ENCODE measurements at regions of chr3 and their contacts with region 1.

Region 1: GRCh38 chr3:69425261-69425660 is 39.4 kb upstream of the FRMD4B start:
- DNase-seq: peak; percentile 69
- H3K4me3 ChIP-seq: no peak overlapping the region
- H3K27ac ChIP-seq: no peak overlapping the region
- H3K4me1 ChIP-seq: peaks cover 15% of the 10 kb centered on the region
- H3K27me3 ChIP-seq: no peaks in the 10 kb centered on the region
- CTCF ChIP-seq: peak; percentile 71 to 74
- POLR2A ChIP-seq: no peak

Region 2: DNA sequence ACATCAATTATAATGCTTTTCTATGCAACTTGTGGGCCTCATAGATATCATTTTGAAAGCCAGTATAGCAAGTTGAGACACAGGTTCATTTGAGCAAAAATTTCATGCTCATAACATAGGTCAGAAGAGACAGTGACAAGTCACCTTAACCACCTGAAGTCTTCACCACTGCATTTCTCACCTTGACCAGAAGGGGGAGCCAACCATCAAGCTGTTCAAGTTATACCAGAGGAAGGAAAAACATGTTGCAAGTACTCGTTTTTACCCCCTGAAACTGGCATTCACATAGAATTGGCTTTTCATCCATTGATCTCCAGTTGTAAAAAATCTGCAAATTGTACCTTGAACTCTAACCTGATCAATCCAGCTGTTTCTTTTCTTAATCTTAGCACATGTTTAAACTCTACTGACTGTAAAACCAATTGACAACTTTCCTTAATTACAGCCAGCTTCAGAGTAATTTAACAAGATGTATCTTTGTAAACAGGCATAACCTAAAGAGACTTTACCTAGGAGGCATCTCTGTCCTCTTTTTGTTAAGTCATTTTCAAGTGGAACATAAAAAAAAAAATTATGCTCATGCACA is 304.3 kb before region 1 on chr3:
- CTCF ChIA-PET with region 1: interaction called, 57 read pairs
- POLR2A ChIA-PET with region 1: no interaction called
- dilution Hi-C with region 1: no loop called
- intact Hi-C with region 1: loop called (anchors 1 kb)
- DNase-seq: peak; percentile 86
- H3K4me3 ChIP-seq: no peak overlapping the region
- H3K27ac ChIP-seq: no peak overlapping the region
- H3K4me1 ChIP-seq: peaks cover 20% of the 10 kb centered on the region
- H3K27me3 ChIP-seq: no peaks in the 10 kb centered on the region
- CTCF ChIP-seq: peak; percentile 85 to 88
- POLR2A ChIP-seq: no peak

Region 3: DNA sequence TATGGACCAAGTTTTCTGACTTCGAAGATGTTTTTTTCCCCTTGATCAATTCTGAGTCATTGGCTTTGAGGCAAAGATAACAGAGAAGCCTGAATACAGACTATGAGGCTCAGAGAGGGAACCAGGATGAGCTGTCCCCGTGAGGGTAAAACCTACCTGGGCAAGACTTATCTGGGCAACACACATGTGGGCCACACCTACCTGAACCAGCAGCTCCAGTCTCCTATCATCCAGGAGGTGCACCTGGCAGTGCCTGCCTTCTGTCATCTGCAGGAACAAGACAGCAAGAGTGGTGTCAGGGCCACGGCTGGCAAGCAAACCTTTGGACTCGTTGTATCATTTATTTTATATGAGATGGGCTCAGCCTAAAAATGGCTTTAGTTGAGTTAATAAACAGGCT is 112.0 kb before region 1 on chr3:
- CTCF ChIA-PET with region 1: interaction called, 12 read pairs
- POLR2A ChIA-PET with region 1: interaction called, 9 read pairs
- dilution Hi-C with region 1: no loop called
- intact Hi-C with region 1: no loop called
- DNase-seq: no peak
- H3K4me3 ChIP-seq: no peak overlapping the region
- H3K27ac ChIP-seq: no peak overlapping the region
- H3K4me1 ChIP-seq: no peaks in the 10 kb centered on the region
- H3K27me3 ChIP-seq: no peaks in the 10 kb centered on the region
- CTCF ChIP-seq: no peak
- POLR2A ChIP-seq: no peak

Region 4: GRCh38 chr3:69324362-69325025 is 100.8 kb before region 1 on chr3:
- CTCF ChIA-PET with region 1: interaction called, 5 read pairs
- POLR2A ChIA-PET with region 1: no interaction called
- dilution Hi-C with region 1: loop called (anchors 10 kb)
- intact Hi-C with region 1: no loop called
- DNase-seq: no peak
- H3K4me3 ChIP-seq: no peak overlapping the region
- H3K27ac ChIP-seq: no peak overlapping the region
- H3K4me1 ChIP-seq: peaks cover 28% of the 10 kb centered on the region
- H3K27me3 ChIP-seq: no peaks in the 10 kb centered on the region
- CTCF ChIP-seq: no peak
- POLR2A ChIP-seq: no peak

Region 5: DNA sequence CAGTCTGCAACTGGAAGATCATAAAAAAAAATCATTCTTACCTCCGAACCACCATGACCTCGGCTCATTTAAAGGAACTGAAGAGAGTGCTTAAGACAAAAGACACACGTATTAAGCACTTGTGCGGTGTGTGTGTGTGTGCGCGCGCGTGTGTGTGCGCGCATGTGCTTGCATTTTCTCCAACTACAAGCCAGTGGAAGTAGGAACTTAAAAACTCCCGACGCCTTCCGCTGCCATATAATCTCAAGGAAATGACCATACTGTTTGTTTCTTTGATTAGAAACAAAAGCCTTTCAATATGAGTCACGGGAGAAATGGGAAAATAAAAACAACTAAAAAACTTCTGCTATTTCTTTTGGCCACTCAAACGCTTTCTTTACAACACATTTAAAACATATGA is 71.8 kb before region 1 on chr3:
- CTCF ChIA-PET with region 1: no interaction called
- POLR2A ChIA-PET with region 1: no interaction called
- dilution Hi-C with region 1: no loop called
- intact Hi-C with region 1: loop called (anchors 2 kb)
- DNase-seq: peak; percentile 98
- H3K4me3 ChIP-seq: peak overlapping the region; percentile 45 to 97 (median 88)
- H3K27ac ChIP-seq: peak overlapping the region; percentile 100
- H3K4me1 ChIP-seq: peaks cover 32% of the 10 kb centered on the region
- H3K27me3 ChIP-seq: no peaks in the 10 kb centered on the region
- CTCF ChIP-seq: no peak
- POLR2A ChIP-seq: peak; percentile 98

Region 6: DNA sequence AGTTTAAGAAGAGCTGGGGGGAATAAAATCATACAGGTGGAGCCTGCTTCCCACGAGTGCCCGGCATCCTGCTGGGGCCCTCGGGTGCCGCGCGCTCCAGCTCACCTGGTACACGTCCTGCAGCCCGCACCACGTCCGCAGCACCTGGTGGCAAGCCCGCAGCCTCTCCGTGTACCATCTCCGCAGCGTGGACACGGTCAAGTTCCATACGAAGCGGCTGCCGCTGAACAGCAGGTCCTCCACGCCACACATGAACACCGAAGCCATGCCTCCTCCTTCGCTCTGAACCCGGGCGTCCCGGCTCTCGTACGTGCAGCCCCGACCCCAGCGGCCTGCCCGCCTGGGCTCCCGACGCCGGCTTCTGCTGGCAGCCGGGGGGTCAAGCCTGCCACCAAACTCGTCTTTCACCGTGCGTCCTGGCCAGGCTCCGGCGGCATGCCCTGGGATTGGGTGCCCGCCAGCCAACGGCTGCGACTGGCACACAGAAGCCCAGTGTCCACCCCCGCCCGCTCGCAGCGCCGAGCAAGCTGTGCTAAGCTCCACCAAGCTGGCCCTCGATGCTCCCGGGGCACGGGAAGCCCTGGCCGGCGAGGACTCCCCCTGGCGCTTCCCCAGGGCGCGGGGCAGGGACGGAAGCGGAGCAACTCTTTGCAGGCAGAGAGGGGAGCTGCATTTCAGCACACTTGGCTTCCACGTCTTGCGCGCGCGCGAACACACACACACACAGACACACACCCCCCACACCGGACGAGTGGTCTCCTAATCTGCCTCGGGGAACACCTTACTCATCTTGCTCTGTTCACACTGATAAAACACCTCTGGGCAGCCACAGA is 39.3 kb before region 1 on chr3 and contains the start of gene FRMD4B:
- CTCF ChIA-PET with region 1: interaction called, 11 read pairs
- POLR2A ChIA-PET with region 1: no interaction called
- dilution Hi-C with region 1: no loop called
- intact Hi-C with region 1: loop called (anchors 2 kb)
- DNase-seq: peak; percentile 74
- H3K4me3 ChIP-seq: peak within 1 kb of the TSS; percentile 18 to 50 (median 33)
- H3K27ac ChIP-seq: no peak within 1 kb of the TSS
- H3K4me1 ChIP-seq: peaks cover 17% of the 10 kb centered on the region
- H3K27me3 ChIP-seq: no peaks in the 10 kb centered on the region
- CTCF ChIP-seq: peak; percentile 38 to 50
- POLR2A ChIP-seq: no peak
- total RNA-seq, gene FRMD4B: 77.7 and 89.7 TPM in 2 replicates

Region 7: DNA sequence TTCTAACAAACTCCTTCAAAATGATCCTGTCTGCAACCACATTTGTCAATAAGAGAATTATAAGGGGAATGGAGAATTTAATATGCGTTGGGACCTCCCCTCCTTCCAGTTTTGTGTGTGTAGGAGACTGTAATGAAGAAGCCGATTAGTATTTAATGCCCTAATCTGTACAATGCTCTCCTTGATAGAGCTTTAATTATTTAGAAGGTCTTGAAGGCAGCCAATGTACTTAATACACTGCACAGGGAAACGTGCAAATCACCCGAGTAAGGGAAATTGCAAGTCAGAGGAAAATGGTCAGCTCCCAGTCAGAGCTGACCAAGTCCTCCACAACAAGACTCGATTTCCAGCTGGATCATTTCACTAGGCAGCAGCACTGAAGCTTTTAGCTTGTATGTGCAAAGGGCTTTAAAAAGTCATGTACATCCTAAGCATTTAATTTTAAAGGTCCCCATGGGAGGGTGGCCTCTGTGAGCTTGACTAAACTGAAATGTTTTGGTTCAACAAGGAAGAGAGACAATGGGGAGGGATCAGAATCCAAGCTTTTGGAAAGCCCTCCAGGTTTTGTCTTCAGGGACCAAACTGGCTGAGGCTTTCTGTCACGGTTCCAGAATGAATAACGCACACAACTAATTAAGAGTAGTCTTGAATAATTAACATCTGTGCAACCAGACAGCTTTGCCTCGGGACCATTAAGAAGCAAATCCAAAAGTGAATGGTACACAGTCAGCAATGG is 154.2 kb after region 1 on chr3:
- CTCF ChIA-PET with region 1: no interaction called
- POLR2A ChIA-PET with region 1: no interaction called
- dilution Hi-C with region 1: no loop called
- intact Hi-C with region 1: no loop called
- DNase-seq: no peak
- H3K4me3 ChIP-seq: no peak overlapping the region
- H3K27ac ChIP-seq: no peak overlapping the region
- H3K4me1 ChIP-seq: no peaks in the 10 kb centered on the region
- H3K27me3 ChIP-seq: peaks cover 1 to 9% of the 10 kb centered on the region in 2 experiments
- CTCF ChIP-seq: no peak
- POLR2A ChIP-seq: no peak

Region 8: GRCh38 chr3:69948246-69948862 is 523.1 kb after region 1 on chr3:
- CTCF ChIA-PET with region 1: interaction called, 3 read pairs
- POLR2A ChIA-PET with region 1: no interaction called
- dilution Hi-C with region 1: no loop called
- intact Hi-C with region 1: loop called (anchors 5 kb)
- DNase-seq: peak; percentile 60
- H3K4me3 ChIP-seq: no peak overlapping the region
- H3K27ac ChIP-seq: no peak overlapping the region
- H3K4me1 ChIP-seq: no peaks in the 10 kb centered on the region
- H3K27me3 ChIP-seq: no peaks in the 10 kb centered on the region
- CTCF ChIP-seq: peak; percentile 30 to 39
- POLR2A ChIP-seq: no peak